B cell (primary cell): ENCODE measurements at regions of chr13 and their contacts with region 1.

Region 1: DNA sequence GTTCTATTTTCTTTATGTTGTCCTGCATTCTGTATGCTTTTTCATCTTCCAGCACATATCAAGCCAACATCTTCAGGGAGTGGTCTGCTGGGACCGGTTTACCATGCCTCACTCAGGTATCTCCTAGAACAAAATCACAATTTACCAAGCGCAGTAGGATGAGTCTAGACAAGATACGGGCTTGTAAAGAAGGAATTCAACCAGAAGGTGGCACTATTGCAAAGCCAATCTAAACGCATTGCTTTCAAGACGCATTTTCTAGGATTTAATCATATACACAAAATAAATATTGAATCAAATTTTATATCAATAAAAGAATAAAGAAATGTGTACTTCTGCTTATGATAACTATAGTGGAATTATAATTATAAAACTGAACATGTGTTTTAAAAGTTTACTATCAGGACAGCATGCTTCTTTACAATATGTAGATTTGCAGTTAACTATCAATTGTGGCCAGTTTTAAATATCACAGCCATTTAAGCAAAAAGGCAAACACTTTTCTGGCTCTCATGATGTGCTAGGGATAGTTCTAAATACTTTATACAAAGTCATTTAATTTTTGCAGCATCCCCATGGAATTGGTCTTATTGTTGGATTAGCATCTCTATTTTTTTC is 16.1 kb upstream of the TPP2 start:
- DNase-seq: peak; percentile 74
- ATAC-seq: peak; percentile 58
- H3K4me3 ChIP-seq: no peak overlapping the region
- H3K4me3 Mint-ChIP-seq: no peak overlapping the region
- H3K27ac ChIP-seq: no peak overlapping the region
- H3K27ac Mint-ChIP-seq: no peak overlapping the region
- H3K4me1 ChIP-seq: peaks cover 4 to 5% of the 10 kb centered on the region in 2 donors
- H3K4me1 Mint-ChIP-seq: peaks cover 8% of the 10 kb centered on the region
- H3K27me3 ChIP-seq: no peaks in the 10 kb centered on the region
- H3K27me3 Mint-ChIP-seq: peaks cover 6% of the 10 kb centered on the region
- CTCF ChIP-seq: peak; percentile 95

Region 2: DNA sequence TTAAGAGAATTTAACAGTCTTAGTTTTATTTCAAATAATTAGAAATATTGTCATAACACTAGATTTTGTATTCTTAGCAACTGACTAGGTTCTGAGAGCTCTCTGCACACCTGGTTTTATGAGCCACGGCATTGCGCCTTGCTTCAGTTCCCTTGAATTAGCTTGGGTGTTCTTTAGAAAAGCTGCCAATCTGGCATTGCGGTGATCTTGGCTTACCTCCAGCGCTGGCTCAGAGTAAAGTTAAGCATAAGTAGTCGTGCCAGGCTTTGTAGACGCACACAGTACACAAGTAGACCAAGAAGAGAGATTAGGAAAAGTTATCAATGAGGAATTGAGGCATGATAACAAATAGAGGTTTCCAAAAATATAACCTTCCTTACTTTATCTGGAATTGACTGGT is 61.8 kb after region 1 on chr13:
- CTCF ChIA-PET with region 1: interaction called, 12 read pairs
- POLR2A ChIA-PET with region 1: no interaction called
- intact Hi-C with region 1: no loop called
- DNase-seq: no peak
- ATAC-seq: no peak
- H3K4me3 ChIP-seq: no peak overlapping the region
- H3K4me3 Mint-ChIP-seq: no peak overlapping the region
- H3K27ac ChIP-seq: no peak overlapping the region
- H3K27ac Mint-ChIP-seq: no peak overlapping the region
- H3K4me1 ChIP-seq: no peaks in the 10 kb centered on the region
- H3K4me1 Mint-ChIP-seq: no peaks in the 10 kb centered on the region
- H3K27me3 ChIP-seq: no peaks in the 10 kb centered on the region
- H3K27me3 Mint-ChIP-seq: no peaks in the 10 kb centered on the region
- CTCF ChIP-seq: no peak

Region 3: DNA sequence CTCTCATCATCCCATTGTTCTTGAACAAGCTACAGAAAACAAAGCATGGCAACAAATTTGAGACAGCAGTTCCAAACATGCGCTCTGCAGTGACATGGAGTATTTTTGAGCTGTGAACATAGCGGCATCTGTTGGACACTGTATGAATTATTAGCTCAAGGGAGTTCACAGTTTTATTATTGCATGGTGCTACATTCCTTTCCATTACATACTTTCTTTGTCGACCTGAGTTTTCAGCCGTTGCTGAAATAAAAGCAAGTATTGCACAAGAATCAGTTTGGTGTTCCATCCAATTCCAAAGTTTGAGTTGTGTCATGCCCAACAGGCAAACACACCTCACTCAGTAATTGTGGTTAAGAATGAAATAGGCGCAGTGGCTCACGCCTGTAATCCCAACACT is 144.3 kb after region 1 on chr13:
- CTCF ChIA-PET with region 1: interaction called, 7 read pairs
- POLR2A ChIA-PET with region 1: no interaction called
- intact Hi-C with region 1: loop called (anchors 1 kb)
- DNase-seq: peak; percentile 3
- ATAC-seq: no peak
- H3K4me3 ChIP-seq: no peak overlapping the region
- H3K4me3 Mint-ChIP-seq: no peak overlapping the region
- H3K27ac ChIP-seq: no peak overlapping the region
- H3K27ac Mint-ChIP-seq: no peak overlapping the region
- H3K4me1 ChIP-seq: no peaks in the 10 kb centered on the region
- H3K4me1 Mint-ChIP-seq: no peaks in the 10 kb centered on the region
- H3K27me3 ChIP-seq: peaks cover 0 to 2% (median 0%) of the 10 kb centered on the region in 4 experiments
- H3K27me3 Mint-ChIP-seq: peaks cover 18% of the 10 kb centered on the region
- CTCF ChIP-seq: no peak

Region 4: GRCh38 chr13:102845630-102846260 is 265.1 kb after region 1 on chr13 and contains the start of gene ERCC5:
- CTCF ChIA-PET with region 1: interaction called, 107 read pairs
- POLR2A ChIA-PET with region 1: interaction called, 3 read pairs
- intact Hi-C with region 1: loop called (anchors 1 kb)
- DNase-seq: peak; percentile 99
- ATAC-seq: peak; percentile 74
- H3K4me3 ChIP-seq: peak within 1 kb of the TSS; percentile 91 to 100 (median 99)
- H3K4me3 Mint-ChIP-seq: peak within 1 kb of the TSS; percentile 91
- H3K27ac ChIP-seq: peak within 1 kb of the TSS; percentile 96 to 97
- H3K27ac Mint-ChIP-seq: peak within 1 kb of the TSS; percentile 98
- H3K4me1 ChIP-seq: peaks cover 21 to 25% of the 10 kb centered on the region in 2 donors
- H3K4me1 Mint-ChIP-seq: peaks cover 32% of the 10 kb centered on the region
- H3K27me3 ChIP-seq: no peaks in the 10 kb centered on the region
- H3K27me3 Mint-ChIP-seq: no peaks in the 10 kb centered on the region
- CTCF ChIP-seq: no peak
- total RNA-seq, gene ERCC5: 88.3 and 100 TPM in 2 replicates